ENCODE measurements at regions of chr4 and their contacts with region 1.

Region 1: DNA sequence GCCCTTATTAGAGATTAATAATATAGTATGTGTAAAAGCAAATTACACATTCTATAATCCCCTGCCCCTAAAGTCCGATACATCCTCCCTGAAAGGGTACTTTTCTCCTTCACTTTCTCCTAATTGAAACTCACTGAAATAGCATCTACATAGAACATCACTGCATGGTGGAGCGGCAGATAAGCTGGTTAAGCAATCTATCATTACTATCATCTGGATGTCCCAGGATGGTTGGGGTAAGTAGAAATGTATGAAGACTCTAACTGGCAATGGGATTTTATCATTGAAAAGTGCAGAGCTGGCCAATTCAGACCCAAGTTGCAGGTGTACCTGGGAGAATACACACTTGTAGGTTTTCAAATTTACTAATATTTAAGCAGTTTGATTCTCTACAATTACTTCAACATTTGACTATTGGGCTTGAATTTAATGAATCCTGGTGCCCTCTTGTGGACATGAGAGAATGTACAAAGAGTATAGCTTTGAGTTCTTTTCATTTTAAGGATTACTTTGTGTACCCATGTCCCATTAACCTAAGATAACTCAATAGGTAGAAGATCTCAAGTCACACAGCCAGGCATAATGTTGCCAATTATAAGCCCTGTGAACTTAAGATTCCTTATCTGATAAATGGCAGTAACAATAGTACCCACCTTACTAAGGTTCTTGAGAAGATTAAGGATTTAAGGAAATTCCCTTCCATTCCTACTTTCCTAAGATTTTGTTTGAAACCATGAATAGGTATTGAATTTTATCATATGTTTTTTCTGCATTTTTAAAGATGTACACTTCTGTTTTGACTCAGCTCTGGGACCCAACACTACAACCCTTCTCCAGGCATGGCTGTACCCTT is 69.8 kb downstream of the SHROOM3 start:
- DNase-seq: peak in 6 of 9 donors; percentile 2 to 39 (median 28)
- ATAC-seq: peak; percentile 67
- H3K4me3 ChIP-seq: no peak overlapping the region
- H3K4me3 Mint-ChIP-seq: no peak overlapping the region
- H3K27ac ChIP-seq: no peak overlapping the region
- H3K27ac Mint-ChIP-seq: no peak overlapping the region
- H3K4me1 ChIP-seq: no peaks in the 10 kb centered on the region
- H3K4me1 Mint-ChIP-seq: no peaks in the 10 kb centered on the region
- H3K27me3 ChIP-seq: no peaks in the 10 kb centered on the region
- H3K27me3 Mint-ChIP-seq: peaks cover 0 to 14% (median 8%) of the 10 kb centered on the region in 5 donors

Region 2: DNA sequence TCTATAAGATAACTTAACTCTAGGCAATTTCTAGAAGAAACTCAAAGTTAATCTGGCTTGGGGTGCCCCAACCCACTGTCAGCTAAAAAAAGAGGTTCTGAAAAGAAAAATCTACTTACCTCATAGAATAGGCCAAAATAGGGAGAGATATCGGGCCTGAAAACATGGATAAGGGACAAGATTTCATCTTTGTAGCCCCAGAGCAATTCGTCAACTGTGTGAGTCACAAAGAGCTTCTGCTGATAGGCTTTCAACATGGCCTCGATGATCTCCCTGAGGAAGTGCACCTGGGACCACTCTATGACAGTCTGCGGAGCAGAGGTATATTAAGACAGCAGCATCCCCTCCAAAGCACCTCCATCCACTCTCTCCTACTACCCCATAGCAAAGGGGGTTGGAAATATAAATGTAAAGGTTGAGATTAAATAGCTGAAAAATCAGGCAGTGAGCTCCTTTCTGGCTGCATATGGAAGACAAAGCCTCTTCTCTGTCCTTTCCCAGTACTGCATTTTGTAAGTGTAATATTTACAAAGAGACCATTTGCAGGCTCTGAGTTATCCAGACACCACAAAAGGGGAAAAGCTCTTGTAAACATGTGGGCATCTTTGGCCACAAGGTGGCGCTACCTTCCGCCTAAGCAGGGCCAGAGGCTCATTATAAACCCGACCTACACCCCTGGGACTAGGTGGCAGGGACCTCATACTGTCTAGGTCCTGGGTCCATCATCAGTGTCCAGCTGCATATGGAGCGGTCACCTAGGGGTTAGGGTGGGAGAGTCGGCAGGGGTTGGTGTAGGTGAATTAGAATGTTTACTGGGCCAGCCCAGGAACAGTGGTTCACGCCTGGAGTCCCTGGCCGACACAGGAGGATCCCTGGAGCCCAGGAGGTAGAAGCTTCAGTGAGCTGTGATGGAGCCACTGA is 325.2 kb before region 1 on chr4:
- CTCF ChIA-PET with region 1: interaction called, 19 read pairs
- POLR2A ChIA-PET with region 1: no interaction called
- intact Hi-C with region 1: loop called (anchors 1 kb)
- DNase-seq: peak; percentile 63 to 82 (median 72)
- ATAC-seq: peak; percentile 95
- H3K4me3 ChIP-seq: no peak overlapping the region
- H3K4me3 Mint-ChIP-seq: no peak overlapping the region
- H3K27ac ChIP-seq: no peak overlapping the region
- H3K27ac Mint-ChIP-seq: peak overlapping the region in 2 of 9 donors; percentile 27 to 53
- H3K4me1 ChIP-seq: no peaks in the 10 kb centered on the region
- H3K4me1 Mint-ChIP-seq: peaks cover 0 to 3% (median 0%) of the 10 kb centered on the region in 7 donors
- H3K27me3 ChIP-seq: no peaks in the 10 kb centered on the region
- H3K27me3 Mint-ChIP-seq: no peaks in the 10 kb centered on the region

Region 3: GRCh38 chr4:76279472-76279871 is 225.4 kb before region 1 on chr4:
- CTCF ChIA-PET with region 1: interaction called, 3 read pairs
- POLR2A ChIA-PET with region 1: no interaction called
- intact Hi-C with region 1: loop called in 1 of 2 experiments (anchors 5 kb)
- DNase-seq: peak in 4 of 9 donors; percentile 14 to 46 (median 34)
- ATAC-seq: peak; percentile 63
- H3K4me3 ChIP-seq: no peak overlapping the region
- H3K4me3 Mint-ChIP-seq: no peak overlapping the region
- H3K27ac ChIP-seq: no peak overlapping the region
- H3K27ac Mint-ChIP-seq: no peak overlapping the region
- H3K4me1 ChIP-seq: no peaks in the 10 kb centered on the region
- H3K4me1 Mint-ChIP-seq: peaks cover 0 to 5% (median 0%) of the 10 kb centered on the region in 7 donors
- H3K27me3 ChIP-seq: no peaks in the 10 kb centered on the region
- H3K27me3 Mint-ChIP-seq: peaks cover 12 to 27% (median 19%) of the 10 kb centered on the region in 5 donors

Region 4: GRCh38 chr4:76430519-76431388 is 74.1 kb before region 1 on chr4:
- CTCF ChIA-PET with region 1: interaction called, 6 read pairs
- POLR2A ChIA-PET with region 1: no interaction called
- intact Hi-C with region 1: loop called in 1 of 2 experiments (anchors 1 kb)
- DNase-seq: peak in 3 of 9 donors; percentile 17 to 32 (median 18)
- ATAC-seq: no peak
- H3K4me3 ChIP-seq: no peak overlapping the region
- H3K4me3 Mint-ChIP-seq: no peak overlapping the region
- H3K27ac ChIP-seq: no peak overlapping the region
- H3K27ac Mint-ChIP-seq: no peak overlapping the region
- H3K4me1 ChIP-seq: no peaks in the 10 kb centered on the region
- H3K4me1 Mint-ChIP-seq: peaks cover 0 to 4% (median 0%) of the 10 kb centered on the region in 7 donors
- H3K27me3 ChIP-seq: no peaks in the 10 kb centered on the region
- H3K27me3 Mint-ChIP-seq: peaks cover 20 to 37% (median 22%) of the 10 kb centered on the region in 5 donors

Region 5: DNA sequence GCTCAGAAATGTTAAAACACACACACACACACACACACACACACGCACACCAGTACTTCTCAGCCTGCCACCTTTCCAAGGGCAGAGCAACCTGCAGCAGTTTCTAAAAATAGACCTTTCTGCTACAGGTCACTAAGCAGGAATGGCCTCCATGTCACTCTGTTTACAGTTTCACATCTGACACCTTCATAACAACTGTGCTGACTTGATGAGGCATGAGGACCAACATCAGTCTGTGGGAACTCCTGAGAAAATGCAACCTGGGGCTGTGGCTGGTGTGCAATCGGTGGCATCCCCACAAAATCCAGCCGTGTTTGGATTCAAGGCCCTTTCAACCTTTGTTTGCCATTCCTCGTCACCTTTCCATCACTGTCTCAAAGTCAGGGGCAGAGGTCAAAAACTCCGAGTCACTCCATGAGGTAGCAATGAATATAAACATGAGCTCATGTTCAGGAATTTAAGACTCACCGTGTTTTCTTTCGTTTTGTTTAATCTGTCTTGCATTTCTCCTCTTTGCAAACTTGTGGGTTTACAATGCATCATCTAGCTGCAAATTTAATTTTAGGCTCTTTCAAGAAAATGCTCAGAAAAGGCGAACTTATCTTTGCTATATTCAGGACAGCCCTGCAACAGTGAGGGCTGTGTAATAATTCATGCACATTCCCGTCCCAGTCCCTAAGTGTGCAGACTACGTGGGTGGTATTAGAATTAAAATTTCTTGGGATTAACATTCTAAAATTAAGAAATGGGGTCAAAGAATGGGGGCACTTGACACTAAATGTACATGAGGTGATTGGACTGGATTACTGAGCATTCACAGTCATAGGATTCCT is 65.5 kb after region 1 on chr4:
- CTCF ChIA-PET with region 1: no interaction called
- POLR2A ChIA-PET with region 1: no interaction called
- intact Hi-C with region 1: no loop called
- DNase-seq: no peak
- ATAC-seq: no peak
- H3K4me3 ChIP-seq: no peak overlapping the region
- H3K4me3 Mint-ChIP-seq: no peak overlapping the region
- H3K27ac ChIP-seq: no peak overlapping the region
- H3K27ac Mint-ChIP-seq: no peak overlapping the region
- H3K4me1 ChIP-seq: no peaks in the 10 kb centered on the region
- H3K4me1 Mint-ChIP-seq: no peaks in the 10 kb centered on the region
- H3K27me3 ChIP-seq: no peaks in the 10 kb centered on the region
- H3K27me3 Mint-ChIP-seq: peaks cover 14 to 35% (median 26%) of the 10 kb centered on the region in 5 donors

Measured in naive thymus-derived CD4-positive, alpha-beta T cell (primary cell).